ENCODE measurements at regions of chr13 and their contacts with region 1.

Region 1: GRCh38 chr13:42969558-42970172 is 22.4 kb downstream of the EPSTI1 start:
- DNase-seq: peak; percentile 63
- ATAC-seq: peak; percentile 97
- H3K4me3 ChIP-seq: no peak overlapping the region
- H3K27ac ChIP-seq: no peak overlapping the region
- H3K4me1 ChIP-seq: no peaks in the 10 kb centered on the region
- H3K27me3 ChIP-seq: no peaks in the 10 kb centered on the region
- CTCF ChIP-seq: peak; percentile 75
- EP300 ChIP-seq: no peak
- POLR2A ChIP-seq: no peak
- RAD21 ChIP-seq: peak; percentile 21; the same call in 1 of the 2 replicates

Region 2: GRCh38 chr13:42574435-42575311 is 395.0 kb before region 1 on chr13:
- CTCF ChIA-PET with region 1: no interaction called
- POLR2A ChIA-PET with region 1: no interaction called
- in situ Hi-C with region 1: no loop called
- intact Hi-C with region 1: no loop called
- DNase-seq: no peak
- ATAC-seq: no peak
- H3K4me3 ChIP-seq: no peak overlapping the region
- H3K27ac ChIP-seq: no peak overlapping the region
- H3K4me1 ChIP-seq: no peaks in the 10 kb centered on the region
- H3K27me3 ChIP-seq: no peaks in the 10 kb centered on the region; a peak in 1 of 5 replicates
- CTCF ChIP-seq: no peak
- EP300 ChIP-seq: no peak
- POLR2A ChIP-seq: no peak
- RAD21 ChIP-seq: no peak

Region 3: DNA sequence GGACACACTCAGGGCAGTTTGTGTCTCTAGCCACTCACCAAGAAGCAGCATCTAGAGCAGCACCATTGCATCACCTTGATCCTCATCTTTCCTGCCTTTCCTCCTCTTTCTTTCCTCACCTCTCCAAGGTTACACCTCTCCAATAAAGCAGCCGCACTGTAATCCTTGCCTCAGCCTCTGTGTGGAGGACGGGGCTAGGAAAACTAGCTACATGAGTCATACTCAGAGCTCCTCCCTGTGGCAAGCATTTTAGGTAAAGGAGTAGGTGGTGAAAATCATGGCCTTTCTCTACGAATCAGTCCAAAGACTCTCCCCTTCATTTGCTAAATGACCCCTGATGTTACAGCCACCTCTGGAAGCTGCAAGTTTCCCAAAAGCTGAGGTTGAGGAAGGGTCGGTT is 162.6 kb after region 1 on chr13:
- CTCF ChIA-PET with region 1: interaction called, 23 read pairs
- POLR2A ChIA-PET with region 1: no interaction called
- in situ Hi-C with region 1: loop called (anchors 5 kb)
- intact Hi-C with region 1: loop called (anchors 1 kb)
- DNase-seq: peak; percentile 52
- ATAC-seq: peak; percentile 90
- H3K4me3 ChIP-seq: no peak overlapping the region
- H3K27ac ChIP-seq: no peak overlapping the region
- H3K4me1 ChIP-seq: no peaks in the 10 kb centered on the region
- H3K27me3 ChIP-seq: peaks cover 2 to 9% of the 10 kb centered on the region in 2 experiments; a peak in 3 of 5 replicates
- CTCF ChIP-seq: peak; percentile 71
- EP300 ChIP-seq: no peak
- POLR2A ChIP-seq: no peak
- RAD21 ChIP-seq: no peak

Region 4: DNA sequence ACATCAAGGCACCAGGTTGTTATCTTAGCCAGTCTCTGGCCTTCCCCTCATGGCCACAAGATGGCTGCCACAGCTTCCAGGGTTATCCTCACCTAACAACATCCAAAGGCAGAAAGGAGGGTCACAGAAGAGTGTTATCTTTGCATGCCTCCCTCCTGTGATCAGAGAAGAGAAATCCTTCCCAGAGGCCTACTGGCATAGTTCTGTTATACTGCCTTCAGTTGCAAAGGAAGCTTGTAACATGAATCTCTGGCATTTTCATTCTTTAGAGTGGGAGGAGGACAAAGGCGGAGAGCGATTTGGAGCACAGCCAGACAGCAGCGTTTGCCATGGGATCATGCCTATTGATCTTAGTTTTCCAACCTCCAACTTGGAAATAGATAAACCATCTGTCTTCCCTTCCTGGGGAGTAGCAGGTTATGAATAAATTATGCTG is 189.4 kb after region 1 on chr13:
- CTCF ChIA-PET with region 1: no interaction called
- POLR2A ChIA-PET with region 1: no interaction called
- in situ Hi-C with region 1: no loop called
- intact Hi-C with region 1: no loop called
- DNase-seq: no peak
- ATAC-seq: no peak
- H3K4me3 ChIP-seq: no peak overlapping the region
- H3K27ac ChIP-seq: no peak overlapping the region
- H3K4me1 ChIP-seq: no peaks in the 10 kb centered on the region
- H3K27me3 ChIP-seq: no peaks in the 10 kb centered on the region
- CTCF ChIP-seq: no peak
- EP300 ChIP-seq: no peak
- POLR2A ChIP-seq: no peak
- RAD21 ChIP-seq: no peak

Region 5: DNA sequence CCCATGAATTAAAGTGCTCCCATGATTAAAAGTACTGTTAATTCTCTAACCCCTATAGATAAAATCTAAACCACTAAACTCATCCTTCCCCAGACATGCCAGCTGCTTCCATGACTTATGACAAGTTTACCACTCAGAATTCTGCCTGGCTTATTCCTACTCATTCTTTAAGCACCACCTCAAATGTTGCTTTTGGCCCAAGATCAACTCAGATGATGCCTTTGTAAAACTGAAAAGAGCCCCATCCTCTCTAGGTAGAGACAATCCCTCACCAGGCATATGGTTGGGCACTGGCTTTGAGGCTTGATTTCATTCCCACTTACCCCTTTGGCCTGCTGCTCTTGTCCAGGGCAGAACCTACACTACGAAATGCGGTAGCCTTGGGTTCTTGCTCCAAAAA is 303.7 kb after region 1 on chr13:
- CTCF ChIA-PET with region 1: no interaction called
- POLR2A ChIA-PET with region 1: no interaction called
- in situ Hi-C with region 1: no loop called
- intact Hi-C with region 1: no loop called
- DNase-seq: no peak
- ATAC-seq: no peak
- H3K4me3 ChIP-seq: no peak overlapping the region
- H3K27ac ChIP-seq: no peak overlapping the region
- H3K4me1 ChIP-seq: peaks cover 10% of the 10 kb centered on the region; the same call in 1 of the 2 replicates
- H3K27me3 ChIP-seq: no peaks in the 10 kb centered on the region
- CTCF ChIP-seq: no peak
- EP300 ChIP-seq: no peak
- POLR2A ChIP-seq: no peak
- RAD21 ChIP-seq: no peak

Region 6: DNA sequence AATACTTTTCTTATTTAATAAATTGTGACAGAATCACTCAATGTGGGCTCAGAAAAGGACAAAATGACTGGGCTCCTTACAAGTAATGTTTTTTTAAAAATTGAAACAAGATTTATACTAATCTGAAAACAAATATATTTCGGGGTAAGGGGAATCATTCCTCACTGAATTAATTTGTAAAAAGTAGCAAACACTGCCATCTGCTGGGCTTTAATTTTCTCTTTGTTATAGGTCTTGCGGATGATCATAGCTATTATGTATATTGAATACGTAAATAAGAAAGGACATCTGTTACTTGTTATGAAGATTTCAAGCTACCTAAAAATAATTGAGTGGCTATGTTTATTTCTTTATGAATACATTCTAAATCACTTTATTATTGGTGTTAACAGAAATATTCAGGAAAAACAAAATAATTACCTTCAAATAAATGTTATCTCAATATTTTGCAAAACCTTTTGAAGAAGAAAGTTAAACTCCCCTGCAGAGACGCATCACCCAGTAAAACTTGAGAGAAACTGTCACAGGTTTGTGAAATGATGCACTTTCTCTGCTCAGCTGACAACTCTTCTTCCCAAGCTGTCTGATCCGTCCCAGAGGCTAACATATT is 834.9 kb after region 1 on chr13:
- CTCF ChIA-PET with region 1: interaction called, 15 read pairs
- POLR2A ChIA-PET with region 1: no interaction called
- in situ Hi-C with region 1: loop called (anchors 25 kb)
- intact Hi-C with region 1: loop called (anchors 1 kb)
- DNase-seq: peak; percentile 39
- ATAC-seq: peak; percentile 54
- H3K4me3 ChIP-seq: no peak overlapping the region
- H3K27ac ChIP-seq: no peak overlapping the region
- H3K4me1 ChIP-seq: no peaks in the 10 kb centered on the region
- H3K27me3 ChIP-seq: no peaks in the 10 kb centered on the region
- CTCF ChIP-seq: peak; percentile 42
- EP300 ChIP-seq: no peak
- POLR2A ChIP-seq: no peak
- RAD21 ChIP-seq: no peak

Region 7: GRCh38 chr13:43874504-43875092 is 904.9 kb after region 1 on chr13:
- CTCF ChIA-PET with region 1: no interaction called
- POLR2A ChIA-PET with region 1: no interaction called
- in situ Hi-C with region 1: no loop called
- intact Hi-C with region 1: loop called (anchors 2 kb)
- DNase-seq: no peak
- ATAC-seq: no peak
- H3K4me3 ChIP-seq: no peak overlapping the region
- H3K27ac ChIP-seq: no peak overlapping the region
- H3K4me1 ChIP-seq: peaks cover 10% of the 10 kb centered on the region
- H3K27me3 ChIP-seq: no peaks in the 10 kb centered on the region; a peak in 1 of 5 replicates
- CTCF ChIP-seq: peak; percentile 30; the same call in 1 of the 2 replicates
- EP300 ChIP-seq: no peak
- POLR2A ChIP-seq: no peak
- RAD21 ChIP-seq: no peak

Measured in HepG2 (cell line).